ENCODE measurements at regions of chr6 and their contacts with region 1.

Region 1: GRCh38 chr6:33391278-33391921 is at the start of gene KIFC1:
- DNase-seq: peak; percentile 97 to 100 (median 99)
- ATAC-seq: peak; percentile 90 to 93 (median 92)
- H3K4me3 ChIP-seq: peak within 1 kb of the TSS; percentile 78 to 80
- H3K4me3 Mint-ChIP-seq: peak within 1 kb of the TSS; percentile 74 to 85 (median 78)
- H3K27ac ChIP-seq: peak within 1 kb of the TSS; percentile 85
- H3K27ac Mint-ChIP-seq: peak within 1 kb of the TSS; percentile 97 to 99
- H3K4me1 ChIP-seq: peaks cover 15 to 23% of the 10 kb centered on the region in 2 experiments
- H3K4me1 Mint-ChIP-seq: peaks cover 21 to 36% (median 24%) of the 10 kb centered on the region in 3 donors
- H3K27me3 ChIP-seq: no peaks in the 10 kb centered on the region
- H3K27me3 Mint-ChIP-seq: no peaks in the 10 kb centered on the region
- total RNA-seq, gene KIFC1: 1.1 to 2.9 (median 1.8) TPM

Region 2: GRCh38 chr6:33410050-33410710 is 18.8 kb after region 1 on chr6:
- CTCF ChIA-PET with region 1: interaction called in 1 of 2 experiments, 11 read pairs
- POLR2A ChIA-PET with region 1: interaction called in 1 of 2 experiments, 4 read pairs
- DNase-seq: peak; percentile 91 to 99 (median 94)
- ATAC-seq: peak; percentile 81 to 85 (median 84)
- H3K4me3 ChIP-seq: peak overlapping the region; percentile 71 to 90
- H3K4me3 Mint-ChIP-seq: peak overlapping the region; percentile 83 to 94 (median 87)
- H3K27ac ChIP-seq: peak overlapping the region; percentile 97
- H3K27ac Mint-ChIP-seq: peak overlapping the region; percentile 88
- H3K4me1 ChIP-seq: peaks cover 4 to 62% of the 10 kb centered on the region in 2 experiments
- H3K4me1 Mint-ChIP-seq: peaks cover 42 to 60% (median 50%) of the 10 kb centered on the region in 3 donors
- H3K27me3 ChIP-seq: no peaks in the 10 kb centered on the region
- H3K27me3 Mint-ChIP-seq: no peaks in the 10 kb centered on the region

Region 3: GRCh38 chr6:33508935-33509926 is 117.8 kb after region 1 on chr6:
- CTCF ChIA-PET with region 1: no interaction called
- POLR2A ChIA-PET with region 1: no interaction called
- DNase-seq: no peak
- ATAC-seq: no peak
- H3K4me3 ChIP-seq: no peak overlapping the region
- H3K4me3 Mint-ChIP-seq: no peak overlapping the region
- H3K27ac ChIP-seq: no peak overlapping the region
- H3K27ac Mint-ChIP-seq: no peak overlapping the region
- H3K4me1 ChIP-seq: peaks cover 0 to 8% of the 10 kb centered on the region in 2 experiments
- H3K4me1 Mint-ChIP-seq: peaks cover 7 to 19% (median 11%) of the 10 kb centered on the region in 3 donors
- H3K27me3 ChIP-seq: peaks cover 0 to 22% of the 10 kb centered on the region in 2 experiments
- H3K27me3 Mint-ChIP-seq: peaks cover 11 to 12% of the 10 kb centered on the region in 2 donors